Head of caudate nucleus (tissue), 42 donors: ENCODE measurements at regions of chr9 and their contacts with region 1.

Region 1: GRCh38 chr9:133792721-133793470 is 54.7 kb upstream of the SARDH start:
- DNase-seq: peak; percentile 50 to 90 (median 78)

Region 2: GRCh38 chr9:133558191-133559126 is 234.4 kb before region 1 on chr9:
- intact Hi-C with region 1: no loop called
- DNase-seq: peak in 41 of 42 donors; percentile 24 to 92 (median 69)

Region 3: DNA sequence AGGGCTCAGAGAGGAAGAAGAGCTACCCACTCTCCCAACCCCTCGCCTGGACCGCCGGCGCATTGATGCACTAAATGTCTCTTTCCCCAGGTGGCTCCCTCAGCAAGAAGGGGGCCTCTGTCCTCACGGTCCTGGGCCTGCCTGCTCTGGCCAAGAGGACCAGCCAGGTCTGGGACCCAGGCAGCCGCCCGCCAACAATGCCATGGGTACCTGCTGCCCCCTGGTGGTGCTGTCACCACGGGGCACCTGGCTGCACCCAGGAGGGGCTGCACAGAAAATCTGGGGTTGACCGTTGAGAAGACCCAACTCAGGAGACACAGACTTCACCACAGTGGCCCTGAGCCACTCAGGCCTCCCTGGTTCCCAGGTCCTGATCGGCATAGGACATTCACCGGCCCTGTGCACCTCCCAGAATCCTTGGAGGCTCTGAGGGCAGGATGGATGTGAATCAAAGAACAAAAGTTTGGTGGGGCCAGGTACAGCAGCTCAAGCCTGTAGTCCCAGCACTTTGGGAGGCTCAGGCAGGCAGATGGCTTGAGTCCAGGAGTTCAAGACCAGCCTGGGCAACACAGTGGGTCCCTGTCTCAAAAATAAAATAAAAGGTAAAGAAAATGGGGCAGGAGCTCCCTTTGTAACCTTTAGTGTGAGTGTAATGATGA is 201.6 kb after region 1 on chr9:
- intact Hi-C with region 1: loop called (anchors 2 kb)
- DNase-seq: peak; percentile 52 to 93 (median 83)